Body of pancreas (tissue), 4 donors: ENCODE measurements at regions of chr14 and their contacts with region 1.

Region 1: DNA sequence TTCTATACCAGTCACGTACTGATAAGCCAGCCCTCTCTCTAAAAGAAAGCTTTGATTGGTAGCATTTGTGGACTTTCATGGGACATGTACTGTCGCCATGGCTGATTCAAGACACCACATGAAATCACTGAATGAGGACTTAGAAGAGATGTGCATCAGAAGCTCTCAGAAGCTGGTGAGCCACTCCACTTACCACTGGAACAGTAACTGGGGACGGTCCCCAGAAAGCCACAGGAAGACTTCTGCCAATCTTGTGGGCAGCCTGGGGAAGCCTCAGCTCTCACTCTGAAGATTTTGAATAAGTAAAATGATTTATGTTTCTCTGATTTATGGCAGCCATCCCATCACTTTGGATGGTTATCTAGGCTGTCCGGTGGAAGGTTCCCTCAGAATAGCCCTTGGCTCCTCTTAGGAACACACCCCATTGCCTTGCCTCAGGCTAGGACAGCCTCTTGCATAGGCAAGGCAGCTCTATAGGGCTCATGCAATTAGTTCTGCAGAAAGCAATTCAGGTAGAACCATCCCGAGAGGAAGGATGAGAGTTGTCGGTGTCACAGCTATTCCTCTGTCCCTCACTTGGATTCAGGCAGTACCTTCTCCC is 9.8 kb downstream of the DHRS1 start:
- DNase-seq: no peak
- ATAC-seq: no peak
- H3K4me3 ChIP-seq: no peak overlapping the region
- H3K27ac ChIP-seq: no peak overlapping the region
- H3K4me1 ChIP-seq: no peaks in the 10 kb centered on the region
- H3K27me3 ChIP-seq: no peaks in the 10 kb centered on the region
- CTCF ChIP-seq: no peak
- POLR2A ChIP-seq: no peak

Region 2: DNA sequence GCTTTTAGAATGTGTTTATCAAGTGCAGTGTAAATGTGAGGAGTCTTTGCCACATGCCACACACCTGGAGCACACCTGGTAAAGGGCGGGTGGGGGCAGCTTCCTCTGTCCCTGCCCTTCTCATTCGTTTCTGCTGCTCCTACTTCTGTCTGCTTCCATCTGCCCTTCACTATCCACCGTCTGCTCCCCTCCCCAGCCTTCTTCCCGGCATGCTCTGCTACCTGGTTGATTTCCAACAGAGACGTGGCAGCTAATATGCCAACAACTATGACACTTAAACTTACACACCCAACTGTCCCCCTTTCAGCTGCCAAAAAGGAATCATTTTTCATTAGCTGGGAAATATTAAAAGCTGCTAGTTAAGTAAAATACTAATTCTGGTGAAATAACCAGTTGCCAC is 247.0 kb before region 1 on chr14:
- intact Hi-C with region 1: no loop called
- DNase-seq: peak; percentile 66 to 79 (median 76)
- ATAC-seq: peak; percentile 96
- H3K4me3 ChIP-seq: no peak overlapping the region
- H3K27ac ChIP-seq: peak overlapping the region in 3 of 4 donors; percentile 66 to 69 (median 67)
- H3K4me1 ChIP-seq: peaks cover 16% of the 10 kb centered on the region
- H3K27me3 ChIP-seq: no peaks in the 10 kb centered on the region
- CTCF ChIP-seq: no peak
- POLR2A ChIP-seq: peak in 2 of 3 donors; percentile 56 to 59

Region 3: GRCh38 chr14:24251880-24252288 is 37.9 kb before region 1 on chr14:
- intact Hi-C with region 1: loop called (anchors 5 kb)
- DNase-seq: no peak
- ATAC-seq: no peak
- H3K4me3 ChIP-seq: no peak overlapping the region
- H3K27ac ChIP-seq: no peak overlapping the region
- H3K4me1 ChIP-seq: no peaks in the 10 kb centered on the region
- H3K27me3 ChIP-seq: no peaks in the 10 kb centered on the region
- CTCF ChIP-seq: no peak
- POLR2A ChIP-seq: no peak

Region 4: GRCh38 chr14:24332268-24332993 is 42.7 kb after region 1 on chr14:
- intact Hi-C with region 1: no loop called
- DNase-seq: peak; percentile 78 to 83 (median 82)
- ATAC-seq: peak; percentile 82
- H3K4me3 ChIP-seq: no peak overlapping the region
- H3K27ac ChIP-seq: no peak overlapping the region
- H3K4me1 ChIP-seq: peaks cover 35% of the 10 kb centered on the region
- H3K27me3 ChIP-seq: peaks cover 4 to 5% of the 10 kb centered on the region in 2 donors
- CTCF ChIP-seq: peak; percentile 60 to 88 (median 73)
- POLR2A ChIP-seq: no peak